Heart right ventricle (tissue), 16 donors: ENCODE measurements at regions of chr6 and their contacts with region 1.

Region 1: GRCh38 chr6:113317881-113318574 is 539.1 kb upstream of the MARCKS start:
- DNase-seq: no peak
- ATAC-seq: no peak
- H3K4me3 ChIP-seq: no peak overlapping the region
- H3K27ac ChIP-seq: no peak overlapping the region
- H3K4me1 ChIP-seq: peaks cover 0 to 12% (median 5%) of the 10 kb centered on the region in 9 donors
- H3K27me3 ChIP-seq: no peaks in the 10 kb centered on the region
- CTCF ChIP-seq: no peak

Region 2: DNA sequence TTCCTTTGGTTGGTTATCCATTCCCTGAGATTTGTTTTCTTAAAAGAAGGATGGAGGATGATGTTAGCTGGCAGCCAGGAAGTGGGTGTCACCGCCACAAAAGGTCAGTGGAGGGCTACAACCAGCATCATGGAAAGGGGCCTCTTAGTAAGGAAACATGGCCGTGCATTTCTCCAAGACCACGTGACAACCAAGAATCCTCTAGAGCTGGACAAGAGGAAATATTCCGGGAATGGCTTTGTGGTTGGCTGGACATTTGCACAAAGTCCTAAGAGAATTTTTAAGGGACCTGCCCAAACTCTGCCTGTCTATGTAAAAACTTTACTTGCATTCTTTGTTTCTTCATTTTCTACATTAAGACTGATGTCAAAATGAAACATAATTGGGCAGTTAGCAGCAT is 139.2 kb after region 1 on chr6:
- intact Hi-C with region 1: loop called in 1 of 10 experiments (anchors 10 kb)
- DNase-seq: peak in 1 of 2 donors; percentile 7
- ATAC-seq: peak in 6 of 8 donors; percentile 18 to 72 (median 37)
- H3K4me3 ChIP-seq: no peak overlapping the region
- H3K27ac ChIP-seq: peak overlapping the region in 2 of 10 donors; percentile 4 to 7
- H3K4me1 ChIP-seq: peaks cover 0 to 25% (median 10%) of the 10 kb centered on the region in 9 donors
- H3K27me3 ChIP-seq: no peaks in the 10 kb centered on the region
- CTCF ChIP-seq: no peak

Region 3: DNA sequence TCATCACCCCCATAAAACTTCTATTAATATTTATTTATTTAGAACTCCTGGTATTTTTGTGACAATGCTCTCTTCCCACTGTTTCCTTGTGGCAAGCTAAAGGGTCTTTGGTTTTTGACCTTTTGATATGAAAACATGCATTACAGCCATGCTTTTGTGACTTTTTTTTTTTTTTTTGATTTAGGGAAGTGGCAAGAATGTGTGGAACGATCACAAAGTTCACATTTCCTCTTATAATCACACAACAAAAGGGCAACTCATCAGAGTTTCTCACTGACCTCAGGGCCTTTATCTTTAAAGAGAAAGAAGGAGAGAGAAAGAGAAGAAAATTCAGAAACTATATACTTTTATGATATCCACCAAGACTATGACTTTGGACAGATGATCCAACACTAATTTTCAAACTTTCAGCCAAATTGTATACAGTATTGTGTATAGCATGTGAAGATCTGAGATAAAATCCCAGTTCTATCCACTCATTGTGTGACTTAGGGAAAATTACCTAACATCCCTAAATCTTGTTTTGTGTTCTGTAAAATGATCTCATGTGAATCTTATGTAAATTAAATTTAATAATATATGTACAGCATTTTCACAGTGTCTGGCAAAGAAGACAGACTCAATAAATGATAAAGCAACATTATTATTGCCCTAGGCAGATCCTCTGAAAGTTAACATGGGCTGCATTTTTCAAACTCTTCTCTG is 432.3 kb after region 1 on chr6:
- intact Hi-C with region 1: loop called in 1 of 10 experiments (anchors 5 kb)
- DNase-seq: no peak
- ATAC-seq: no peak
- H3K4me3 ChIP-seq: no peak overlapping the region
- H3K27ac ChIP-seq: peak overlapping the region in 1 of 10 donors; percentile 50
- H3K4me1 ChIP-seq: peaks cover 0 to 11% (median 0%) of the 10 kb centered on the region in 9 donors
- H3K27me3 ChIP-seq: no peaks in the 10 kb centered on the region
- CTCF ChIP-seq: no peak